Ascending aorta (tissue), 2 donors: ENCODE measurements at regions of chr2 and their contacts with region 1.

Region 1: DNA sequence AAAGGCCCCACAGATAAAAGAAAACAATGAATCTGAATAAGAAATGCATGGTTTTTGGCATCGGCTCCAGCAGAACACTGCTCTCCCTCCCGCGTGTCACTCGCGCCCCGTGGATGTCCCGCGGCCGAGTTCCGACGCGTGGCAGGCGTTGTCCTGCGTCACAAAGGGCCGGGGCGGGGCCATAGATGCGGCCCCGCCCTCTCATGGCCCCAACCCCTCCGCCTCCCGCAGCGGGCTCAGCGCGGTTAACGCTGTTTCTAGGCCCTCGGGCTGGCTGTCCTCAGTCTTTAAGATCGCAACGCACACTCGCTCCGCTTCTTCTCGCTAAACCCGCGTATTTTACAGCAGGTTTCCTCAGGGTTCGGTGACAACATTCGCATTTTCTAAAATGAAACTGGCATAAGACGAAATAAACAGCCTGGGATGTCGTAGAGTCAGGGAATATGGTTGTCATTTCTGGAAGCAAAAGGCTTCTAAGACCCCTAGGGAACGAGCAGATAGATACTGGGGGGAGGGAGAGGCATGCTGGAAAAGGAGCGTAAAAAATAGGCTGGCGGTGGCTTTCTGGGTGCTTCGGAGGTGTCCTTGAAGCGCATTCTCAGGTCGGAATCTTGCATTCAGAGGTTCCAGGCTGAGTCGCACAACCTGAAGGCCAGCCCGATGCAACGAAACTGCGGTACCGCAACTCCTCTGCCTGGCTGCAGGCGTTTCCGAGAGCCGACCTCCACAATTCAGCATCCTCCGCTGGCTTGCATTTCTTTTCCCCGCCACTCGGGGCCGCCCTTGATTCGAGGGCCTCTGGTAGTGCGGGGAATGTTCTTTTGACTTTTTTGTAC is at the start of gene FKBP7:
- DNase-seq: peak; percentile 53 to 92
- H3K4me3 ChIP-seq: peak within 1 kb of the TSS; percentile 77 to 89
- H3K27ac ChIP-seq: peak within 1 kb of the TSS; percentile 78 to 94
- H3K4me1 ChIP-seq: peaks cover 0 to 23% of the 10 kb centered on the region in 2 donors
- H3K27me3 ChIP-seq: no peaks in the 10 kb centered on the region
- CTCF ChIP-seq: peak; percentile 34 to 56 (median 49)
- total RNA-seq, gene FKBP7: 7.7 TPM

Region 2: GRCh38 chr2:177275041-177276020 is 1203.3 kb before region 1 on chr2:
- intact Hi-C with region 1: loop called (anchors 10 kb)
- DNase-seq: no peak
- H3K4me3 ChIP-seq: peak overlapping the region; percentile 27 to 46
- H3K27ac ChIP-seq: peak overlapping the region; percentile 65 to 79
- H3K4me1 ChIP-seq: peaks cover 0 to 21% of the 10 kb centered on the region in 2 donors
- H3K27me3 ChIP-seq: no peaks in the 10 kb centered on the region
- CTCF ChIP-seq: no peak

Region 3: GRCh38 chr2:178112202-178113152 is 366.2 kb before region 1 on chr2 and contains the start of gene RBM45:
- intact Hi-C with region 1: loop called (anchors 5 kb)
- DNase-seq: peak; percentile 54 to 96
- H3K4me3 ChIP-seq: peak within 1 kb of the TSS; percentile 84 to 94
- H3K27ac ChIP-seq: peak within 1 kb of the TSS; percentile 66 to 77
- H3K4me1 ChIP-seq: peaks cover 0 to 6% of the 10 kb centered on the region in 2 donors
- H3K27me3 ChIP-seq: no peaks in the 10 kb centered on the region
- CTCF ChIP-seq: peak; percentile 88 to 97 (median 94)
- total RNA-seq, gene RBM45: 2.8 TPM

Region 4: GRCh38 chr2:178414266-178415247 is 64.1 kb before region 1 on chr2:
- intact Hi-C with region 1: loop called (anchors 1 kb)
- DNase-seq: peak; percentile 69 to 95
- H3K4me3 ChIP-seq: peak overlapping the region; percentile 79
- H3K27ac ChIP-seq: peak overlapping the region; percentile 96 to 97
- H3K4me1 ChIP-seq: no peaks in the 10 kb centered on the region
- H3K27me3 ChIP-seq: no peaks in the 10 kb centered on the region
- CTCF ChIP-seq: peak; percentile 74 to 94 (median 91)

Region 5: GRCh38 chr2:178522950-178523595 is 44.4 kb after region 1 on chr2:
- intact Hi-C with region 1: loop called (anchors 5 kb)
- DNase-seq: peak; percentile 55 to 92
- H3K4me3 ChIP-seq: peak overlapping the region; percentile 67 to 76
- H3K27ac ChIP-seq: peak overlapping the region; percentile 60 to 71
- H3K4me1 ChIP-seq: peaks cover 0 to 6% of the 10 kb centered on the region in 2 donors
- H3K27me3 ChIP-seq: no peaks in the 10 kb centered on the region
- CTCF ChIP-seq: peak; percentile 59 to 82 (median 74)

Region 6: DNA sequence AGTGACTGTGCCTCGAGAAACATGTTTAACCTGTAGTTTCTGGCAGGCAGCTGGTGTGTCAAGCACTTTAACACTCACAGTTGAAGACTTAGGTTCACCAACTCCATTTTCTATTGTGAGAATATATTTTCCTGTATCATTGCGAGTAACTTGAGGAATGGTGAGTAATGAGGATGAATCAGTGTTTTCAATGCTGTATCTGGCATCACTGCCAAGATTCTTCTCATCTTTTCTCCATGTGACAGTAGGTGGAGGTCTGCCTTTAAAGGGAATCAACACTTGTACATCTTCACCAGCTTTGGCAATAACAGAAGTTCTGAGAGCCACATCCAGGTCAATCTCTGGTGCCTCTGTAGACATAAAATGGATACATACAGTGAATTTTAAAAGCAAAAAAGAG is 74.4 kb after region 1 on chr2:
- intact Hi-C with region 1: no loop called
- DNase-seq: no peak
- H3K4me3 ChIP-seq: no peak overlapping the region
- H3K27ac ChIP-seq: no peak overlapping the region
- H3K4me1 ChIP-seq: no peaks in the 10 kb centered on the region
- H3K27me3 ChIP-seq: no peaks in the 10 kb centered on the region
- CTCF ChIP-seq: no peak